HCT116 (cell line): ENCODE measurements at regions of chr1 and their contacts with region 1.

Region 1: GRCh38 chr1:56409094-56409691 is 170.2 kb downstream of the PLPP3 start:
- DNase-seq: peak; percentile 47
- ATAC-seq: peak; percentile 96
- H3K4me3 ChIP-seq: no peak overlapping the region
- H3K27ac ChIP-seq: no peak overlapping the region
- H3K4me1 ChIP-seq: peaks cover 0 to 9% of the 10 kb centered on the region in 2 experiments; a peak in 2 of 4 replicates
- H3K27me3 ChIP-seq: no peaks in the 10 kb centered on the region
- CTCF ChIP-seq: peak; percentile 71 to 79 (median 74)
- POLR2A ChIP-seq: no peak
- RAD21 ChIP-seq: peak; percentile 78

Region 2: DNA sequence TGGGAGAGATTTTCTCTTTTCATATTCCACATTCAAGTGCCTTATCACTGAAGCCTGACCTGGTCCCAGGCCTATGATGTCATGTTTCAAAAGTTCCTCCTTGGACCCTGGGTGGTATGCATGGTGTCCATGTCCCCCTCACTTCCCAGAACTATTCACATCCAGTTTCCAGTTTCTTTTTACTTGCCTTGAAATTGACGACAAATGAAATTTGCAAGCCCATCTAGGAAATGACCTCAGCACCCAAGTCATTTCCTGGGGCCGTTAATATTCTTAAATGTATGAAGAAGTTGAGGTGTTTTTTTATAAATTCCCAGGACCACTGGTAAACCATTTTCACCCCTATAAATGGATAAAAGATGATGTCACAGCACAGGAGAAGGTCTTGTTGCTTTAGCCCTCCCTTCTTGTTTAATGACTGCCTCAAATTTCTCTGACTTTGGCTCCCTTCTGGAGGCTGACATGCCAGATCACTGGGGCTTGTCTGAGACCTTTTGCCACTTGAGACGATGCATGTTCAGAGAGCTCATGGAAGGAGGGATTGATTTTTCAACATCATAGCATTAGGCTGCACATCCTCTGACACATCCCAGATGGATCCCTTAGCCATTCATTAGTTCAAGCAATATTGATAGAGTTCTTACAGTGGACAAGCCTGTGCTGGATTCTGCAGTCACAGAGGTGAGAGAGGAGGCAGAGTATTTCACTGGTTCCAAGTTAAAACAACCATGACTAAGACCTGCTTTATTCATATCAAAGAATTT is 51.1 kb before region 1 on chr1:
- CTCF ChIA-PET with region 1: no interaction called
- POLR2A ChIA-PET with region 1: no interaction called
- RAD21 ChIA-PET with region 1: no interaction called
- intact Hi-C with region 1: loop called (anchors 10 kb)
- DNase-seq: no peak
- ATAC-seq: no peak
- H3K4me3 ChIP-seq: no peak overlapping the region
- H3K27ac ChIP-seq: no peak overlapping the region
- H3K4me1 ChIP-seq: no peaks in the 10 kb centered on the region
- H3K27me3 ChIP-seq: no peaks in the 10 kb centered on the region
- CTCF ChIP-seq: no peak
- POLR2A ChIP-seq: no peak
- RAD21 ChIP-seq: no peak

Region 3: DNA sequence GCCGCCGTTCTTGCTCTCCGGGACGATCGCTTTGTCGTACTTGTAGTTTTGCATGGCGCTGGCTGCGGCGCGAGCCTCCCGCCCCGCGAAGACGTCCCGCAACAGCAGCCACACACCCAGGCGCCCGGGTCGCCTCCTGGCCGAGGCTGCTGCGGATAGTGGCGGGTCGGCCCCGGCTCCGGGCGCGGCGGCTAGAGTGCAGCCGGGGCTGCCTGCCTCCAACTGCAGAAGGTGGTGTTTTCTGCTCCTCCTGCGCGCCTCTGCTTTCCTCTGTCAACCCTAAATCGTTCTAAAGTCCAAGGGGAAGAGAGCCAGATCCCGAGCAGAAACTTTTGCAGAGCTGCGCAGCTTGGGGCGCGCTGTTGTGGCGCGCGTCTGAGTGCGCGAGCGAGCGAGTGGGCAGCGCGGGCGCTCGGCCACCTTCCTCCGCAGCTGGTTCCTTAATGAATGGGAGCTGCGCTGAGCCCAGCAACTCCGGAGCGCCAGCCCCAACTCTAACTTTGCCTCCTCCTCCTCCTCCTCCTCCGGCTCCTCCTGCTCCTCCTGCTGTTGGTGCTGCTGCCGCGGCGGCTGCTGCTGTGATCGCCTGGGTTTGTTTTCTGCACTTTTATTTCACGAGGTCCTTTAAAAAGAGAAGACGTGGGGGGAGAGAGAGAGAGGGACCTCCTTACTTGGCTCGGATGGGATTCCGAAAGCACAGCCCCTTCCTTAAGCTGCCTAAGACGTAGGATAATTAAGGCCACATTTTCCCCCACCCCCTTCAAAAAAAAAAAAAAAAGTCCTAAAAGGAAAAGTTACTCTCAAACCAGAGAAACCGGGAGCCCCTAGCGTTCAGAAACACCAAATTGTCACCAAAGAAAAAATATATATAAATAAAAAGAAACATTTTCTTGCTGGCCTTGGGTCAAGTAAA is 170.0 kb after region 1 on chr1 and contains the start of gene PLPP3:
- CTCF ChIA-PET with region 1: interaction called, 28 read pairs
- POLR2A ChIA-PET with region 1: interaction called, 3 read pairs
- RAD21 ChIA-PET with region 1: interaction called in 1 of 2 experiments, 5 read pairs
- intact Hi-C with region 1: loop called (anchors 1 kb)
- DNase-seq: peak; percentile 66
- ATAC-seq: peak; percentile 91
- H3K4me3 ChIP-seq: peak within 1 kb of the TSS; percentile 60 to 71
- H3K27ac ChIP-seq: peak within 1 kb of the TSS; percentile 32
- H3K4me1 ChIP-seq: peaks cover 5 to 17% of the 10 kb centered on the region in 2 experiments; a peak in 3 of 4 replicates
- H3K27me3 ChIP-seq: no peaks in the 10 kb centered on the region
- CTCF ChIP-seq: peak; percentile 45 to 66 (median 52); a peak in 5 of 6 replicates
- POLR2A ChIP-seq: peak; percentile 90
- RAD21 ChIP-seq: peak; percentile 54
- total RNA-seq, gene PLPP3: 3.4 TPM

Region 4: DNA sequence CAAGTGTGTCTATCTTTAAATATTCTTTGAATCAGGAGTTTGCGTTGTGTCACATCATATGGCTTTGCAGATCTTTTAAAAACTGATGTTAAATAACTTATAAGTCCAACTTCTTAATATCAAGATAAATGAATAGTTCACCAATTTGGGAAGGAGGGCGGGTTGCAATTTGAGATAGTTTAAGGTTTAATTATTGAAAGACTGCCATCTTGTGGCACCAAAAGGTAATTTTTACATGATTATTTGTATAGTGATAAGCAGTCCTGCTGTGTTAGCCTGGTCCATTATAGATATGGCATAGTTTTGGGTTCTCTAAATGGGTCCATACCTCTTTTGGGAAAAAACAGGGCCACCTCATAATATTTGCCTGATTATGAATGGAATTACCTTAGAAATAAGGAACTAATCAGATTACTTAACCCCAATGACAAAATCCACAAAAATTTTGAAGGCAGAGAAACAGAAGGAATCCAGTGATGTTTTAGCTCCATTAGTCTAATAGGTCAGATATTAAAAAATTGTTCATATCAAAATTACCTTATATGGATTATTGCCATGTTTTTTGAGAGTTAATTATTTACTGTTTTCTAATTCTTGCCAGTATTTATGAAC is 300.2 kb after region 1 on chr1:
- CTCF ChIA-PET with region 1: no interaction called
- POLR2A ChIA-PET with region 1: no interaction called
- RAD21 ChIA-PET with region 1: no interaction called
- intact Hi-C with region 1: loop called (anchors 10 kb)
- DNase-seq: peak; percentile 45
- ATAC-seq: peak; percentile 88
- H3K4me3 ChIP-seq: no peak overlapping the region
- H3K27ac ChIP-seq: no peak overlapping the region
- H3K4me1 ChIP-seq: peaks cover 0 to 5% of the 10 kb centered on the region in 2 experiments; a peak in 2 of 4 replicates
- H3K27me3 ChIP-seq: peaks cover 33% of the 10 kb centered on the region
- CTCF ChIP-seq: peak; percentile 26 to 59 (median 43); a peak in 4 of 6 replicates
- POLR2A ChIP-seq: no peak
- RAD21 ChIP-seq: peak; percentile 68